ENCODE measurements at regions of chr3 and their contacts with region 1.

Region 1: GRCh38 chr3:31981206-31982181 is at the starts of genes OSBPL10 and ZNF860:
- DNase-seq: peak; percentile 63
- ATAC-seq: peak; percentile 62
- H3K4me3 Mint-ChIP-seq: peak within 1 kb of the TSS; percentile 97
- H3K27ac Mint-ChIP-seq: peak within 1 kb of the TSS; percentile 92
- H3K4me1 Mint-ChIP-seq: peaks cover 85% of the 10 kb centered on the region
- H3K27me3 Mint-ChIP-seq: no peaks in the 10 kb centered on the region
- CTCF ChIP-seq: no peak
- total RNA-seq, gene OSBPL10: 125 and 137 TPM in 2 replicates
- total RNA-seq, gene ZNF860: 16.6 and 19.1 TPM in 2 replicates

Region 2: GRCh38 chr3:31748281-31748939 is 233.1 kb before region 1 on chr3:
- CTCF ChIA-PET with region 1: no interaction called
- POLR2A ChIA-PET with region 1: no interaction called
- intact Hi-C with region 1: no loop called
- DNase-seq: no peak
- ATAC-seq: no peak
- H3K4me3 Mint-ChIP-seq: no peak overlapping the region
- H3K27ac Mint-ChIP-seq: no peak overlapping the region
- H3K4me1 Mint-ChIP-seq: peaks cover 6% of the 10 kb centered on the region
- H3K27me3 Mint-ChIP-seq: no peaks in the 10 kb centered on the region
- CTCF ChIP-seq: no peak

Region 3: DNA sequence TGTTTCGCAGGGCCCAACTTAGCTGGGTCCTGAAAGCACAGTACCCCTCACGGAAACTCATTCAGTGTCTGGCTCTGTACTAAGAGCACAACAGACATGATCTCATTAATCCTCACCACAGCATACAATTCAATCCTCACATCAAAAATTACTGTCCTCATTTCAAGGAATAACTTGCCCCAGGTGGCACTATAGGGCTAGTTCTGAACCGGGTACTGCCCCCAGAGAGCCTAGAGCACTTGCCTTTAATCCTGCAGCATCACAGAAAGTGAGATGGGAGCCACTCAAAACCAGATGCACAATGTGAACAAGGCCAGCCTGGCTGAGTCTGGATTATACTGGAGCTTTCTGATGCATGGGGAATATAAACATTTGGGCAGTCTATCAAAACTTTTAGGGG is 123.1 kb before region 1 on chr3:
- CTCF ChIA-PET with region 1: interaction called, 6 read pairs
- POLR2A ChIA-PET with region 1: interaction called, 3 read pairs
- intact Hi-C with region 1: loop called (anchors 1 kb)
- DNase-seq: no peak
- ATAC-seq: peak; percentile 69
- H3K4me3 Mint-ChIP-seq: no peak overlapping the region
- H3K27ac Mint-ChIP-seq: peak overlapping the region; percentile 71
- H3K4me1 Mint-ChIP-seq: peaks cover 74% of the 10 kb centered on the region
- H3K27me3 Mint-ChIP-seq: no peaks in the 10 kb centered on the region
- CTCF ChIP-seq: no peak

Region 4: GRCh38 chr3:31925271-31925630 is 56.2 kb before region 1 on chr3:
- CTCF ChIA-PET with region 1: no interaction called
- POLR2A ChIA-PET with region 1: interaction called, 4 read pairs
- intact Hi-C with region 1: loop called (anchors 2 kb)
- DNase-seq: no peak
- ATAC-seq: peak; percentile 51
- H3K4me3 Mint-ChIP-seq: peak overlapping the region; percentile 36
- H3K27ac Mint-ChIP-seq: peak overlapping the region; percentile 84
- H3K4me1 Mint-ChIP-seq: peaks cover 84% of the 10 kb centered on the region
- H3K27me3 Mint-ChIP-seq: no peaks in the 10 kb centered on the region
- CTCF ChIP-seq: no peak

Region 5: DNA sequence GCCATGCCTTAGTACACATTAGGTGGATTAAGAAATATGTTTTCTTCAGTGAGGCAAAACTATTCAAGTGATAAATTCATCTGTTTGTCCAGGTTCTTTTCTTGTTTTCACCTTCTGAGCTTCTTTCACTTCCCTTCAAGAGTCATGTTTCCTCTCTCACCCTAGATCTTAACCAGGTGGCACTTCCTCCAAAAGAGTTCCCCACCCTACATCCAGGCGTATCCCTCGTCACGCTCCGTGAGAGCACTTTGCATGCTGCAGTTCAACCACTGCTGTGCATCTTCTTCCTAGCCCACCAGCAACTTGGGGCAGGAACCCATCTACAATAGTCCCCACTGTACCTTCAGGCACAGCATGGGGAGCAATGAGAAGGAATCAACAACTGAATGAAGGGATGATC is 29.3 kb before region 1 on chr3:
- CTCF ChIA-PET with region 1: interaction called, 3 read pairs
- POLR2A ChIA-PET with region 1: interaction called, 15 read pairs
- intact Hi-C with region 1: loop called (anchors 1 kb)
- DNase-seq: peak; percentile 61
- ATAC-seq: peak; percentile 82
- H3K4me3 Mint-ChIP-seq: peak overlapping the region; percentile 75
- H3K27ac Mint-ChIP-seq: peak overlapping the region; percentile 96
- H3K4me1 Mint-ChIP-seq: peaks cover 91% of the 10 kb centered on the region
- H3K27me3 Mint-ChIP-seq: no peaks in the 10 kb centered on the region
- CTCF ChIP-seq: no peak

Region 6: GRCh38 chr3:31968927-31969418 is 12.5 kb before region 1 on chr3:
- CTCF ChIA-PET with region 1: interaction called, 6 read pairs
- POLR2A ChIA-PET with region 1: interaction called, 16 read pairs
- intact Hi-C with region 1: loop called (anchors 1 kb)
- DNase-seq: no peak
- ATAC-seq: no peak
- H3K4me3 Mint-ChIP-seq: no peak overlapping the region
- H3K27ac Mint-ChIP-seq: peak overlapping the region; percentile 94
- H3K4me1 Mint-ChIP-seq: peaks cover 83% of the 10 kb centered on the region
- H3K27me3 Mint-ChIP-seq: no peaks in the 10 kb centered on the region
- CTCF ChIP-seq: no peak

Region 7: DNA sequence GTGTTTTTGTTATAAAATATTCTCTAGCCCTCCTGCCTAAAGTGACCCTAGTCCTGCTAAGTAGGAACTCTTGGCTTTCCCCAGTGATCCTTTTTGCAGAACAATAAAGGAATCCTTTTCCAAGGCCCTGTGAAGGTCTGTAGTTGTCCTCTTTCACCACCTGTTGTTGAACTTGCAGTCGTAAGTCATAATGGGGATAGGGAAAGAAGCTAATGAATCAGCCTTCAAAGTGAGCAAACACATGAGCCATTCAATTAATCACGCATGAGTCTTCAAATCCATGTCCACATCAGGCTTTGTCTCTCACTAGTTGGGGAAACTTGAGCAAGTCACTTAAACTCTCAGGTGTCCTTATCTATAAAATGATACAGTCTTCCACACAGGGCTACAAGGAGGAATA is 27.6 kb after region 1 on chr3:
- CTCF ChIA-PET with region 1: interaction called, 3 read pairs
- POLR2A ChIA-PET with region 1: interaction called, 3 read pairs
- intact Hi-C with region 1: loop called (anchors 1 kb)
- DNase-seq: no peak
- ATAC-seq: no peak
- H3K4me3 Mint-ChIP-seq: no peak overlapping the region
- H3K27ac Mint-ChIP-seq: peak overlapping the region; percentile 63
- H3K4me1 Mint-ChIP-seq: peaks cover 26% of the 10 kb centered on the region
- H3K27me3 Mint-ChIP-seq: no peaks in the 10 kb centered on the region
- CTCF ChIP-seq: no peak